PC-9 (cell line): ENCODE measurements at regions of chr2 and their contacts with region 1.

Region 1: DNA sequence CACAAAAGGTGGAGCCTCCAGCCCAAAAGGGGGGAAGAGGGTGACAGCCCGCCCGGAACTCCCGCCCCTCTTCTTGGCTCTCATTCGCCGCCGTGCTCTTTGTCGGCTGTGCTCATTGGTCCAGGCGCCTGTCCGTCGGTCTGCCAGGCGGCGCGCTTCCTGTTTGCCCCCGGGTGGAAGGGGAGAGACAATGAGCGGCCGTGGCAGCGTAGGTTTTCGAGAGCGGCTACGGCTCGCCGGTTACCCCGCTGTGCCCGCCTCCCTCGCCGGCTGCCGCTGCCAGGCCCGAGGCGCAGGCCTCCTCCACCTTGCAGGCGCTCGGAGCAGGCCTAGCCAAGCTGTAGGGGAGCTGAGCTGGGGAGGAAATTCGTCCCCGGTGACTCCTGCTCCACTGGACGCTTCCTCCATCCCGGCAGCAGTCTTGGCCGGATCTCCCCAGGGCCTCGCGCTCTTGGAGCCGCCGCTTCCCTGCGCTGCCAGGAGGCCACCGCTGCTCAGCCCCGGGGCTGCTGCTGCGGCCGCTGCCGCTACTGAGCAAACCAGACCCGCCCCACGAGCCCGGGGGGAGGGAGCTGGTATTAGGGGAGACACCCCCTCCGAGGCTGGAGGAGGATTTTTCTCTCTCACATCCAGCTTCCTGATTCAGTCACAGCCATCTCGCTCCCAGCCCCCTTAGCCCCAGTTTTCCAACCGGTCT is at the start of gene SP3:
- DNase-seq: peak; percentile 97 to 99
- H3K4me3 ChIP-seq: peak within 1 kb of the TSS; percentile 70
- H3K27ac ChIP-seq: peak within 1 kb of the TSS; percentile 85
- H3K4me1 ChIP-seq: peaks cover 43% of the 10 kb centered on the region
- H3K27me3 ChIP-seq: no peaks in the 10 kb centered on the region
- CTCF ChIP-seq: no peak
- total RNA-seq, gene SP3: 93.6 and 127 TPM in 2 replicates

Region 2: GRCh38 chr2:173652767-173653431 is 312.6 kb before region 1 on chr2:
- CTCF ChIA-PET with region 1: no interaction called
- POLR2A ChIA-PET with region 1: no interaction called
- intact Hi-C with region 1: loop called (anchors 2 kb)
- DNase-seq: peak; percentile 87 to 97
- H3K4me3 ChIP-seq: no peak overlapping the region
- H3K27ac ChIP-seq: peak overlapping the region; percentile 86
- H3K4me1 ChIP-seq: peaks cover 18% of the 10 kb centered on the region
- H3K27me3 ChIP-seq: no peaks in the 10 kb centered on the region
- CTCF ChIP-seq: no peak

Region 3: GRCh38 chr2:174004905-174005605 is 39.6 kb after region 1 on chr2:
- CTCF ChIA-PET with region 1: no interaction called
- POLR2A ChIA-PET with region 1: interaction called, 8 read pairs
- intact Hi-C with region 1: loop called (anchors 1 kb)
- DNase-seq: peak; percentile 44 to 55
- H3K4me3 ChIP-seq: no peak overlapping the region
- H3K27ac ChIP-seq: no peak overlapping the region
- H3K4me1 ChIP-seq: peaks cover 7% of the 10 kb centered on the region
- H3K27me3 ChIP-seq: no peaks in the 10 kb centered on the region
- CTCF ChIP-seq: no peak

Region 4: DNA sequence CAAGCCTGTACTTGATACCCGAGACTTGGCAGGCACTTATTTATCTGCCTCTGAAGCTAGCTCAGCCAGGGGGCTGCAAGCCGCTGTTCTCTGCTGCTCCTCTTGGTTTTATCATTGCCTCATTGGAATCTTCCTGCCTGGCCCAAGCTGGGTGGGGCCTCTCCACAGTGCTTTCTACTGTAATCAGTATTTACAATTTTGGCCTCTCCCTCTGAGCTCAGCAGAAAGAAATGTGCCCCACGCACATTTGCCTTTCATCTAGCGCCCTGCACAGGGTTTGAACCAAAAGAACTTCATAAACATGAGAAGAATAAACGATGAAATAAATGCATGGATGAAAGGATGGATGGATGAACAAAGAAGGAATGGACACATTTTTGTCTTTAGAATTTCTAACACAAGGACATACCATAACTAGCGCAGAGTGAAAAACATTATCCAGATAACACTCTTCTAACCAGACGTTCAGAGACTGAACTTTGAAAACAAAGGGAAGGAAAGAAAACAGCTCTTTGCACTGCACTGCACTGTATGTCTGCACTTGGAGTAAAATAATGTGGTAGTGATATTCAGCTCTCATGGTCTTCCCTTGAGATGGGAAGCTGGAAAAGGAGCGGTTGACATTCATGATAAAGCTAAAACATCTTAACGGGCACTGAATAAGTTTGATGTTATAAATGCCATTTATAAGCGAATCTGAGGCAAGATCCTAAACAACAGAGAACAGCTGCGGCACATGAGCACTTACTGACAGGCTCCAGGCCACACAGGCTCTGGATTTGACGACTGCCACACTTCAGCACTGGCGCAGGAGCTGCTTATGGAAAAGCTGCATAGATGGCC is 86.5 kb after region 1 on chr2:
- CTCF ChIA-PET with region 1: no interaction called
- POLR2A ChIA-PET with region 1: interaction called, 6 read pairs
- intact Hi-C with region 1: loop called (anchors 5 kb)
- DNase-seq: peak; percentile 83
- H3K4me3 ChIP-seq: no peak overlapping the region; the same call in 1 of the 2 replicates
- H3K27ac ChIP-seq: no peak overlapping the region
- H3K4me1 ChIP-seq: peaks cover 21% of the 10 kb centered on the region
- H3K27me3 ChIP-seq: no peaks in the 10 kb centered on the region
- CTCF ChIP-seq: no peak

Region 5: DNA sequence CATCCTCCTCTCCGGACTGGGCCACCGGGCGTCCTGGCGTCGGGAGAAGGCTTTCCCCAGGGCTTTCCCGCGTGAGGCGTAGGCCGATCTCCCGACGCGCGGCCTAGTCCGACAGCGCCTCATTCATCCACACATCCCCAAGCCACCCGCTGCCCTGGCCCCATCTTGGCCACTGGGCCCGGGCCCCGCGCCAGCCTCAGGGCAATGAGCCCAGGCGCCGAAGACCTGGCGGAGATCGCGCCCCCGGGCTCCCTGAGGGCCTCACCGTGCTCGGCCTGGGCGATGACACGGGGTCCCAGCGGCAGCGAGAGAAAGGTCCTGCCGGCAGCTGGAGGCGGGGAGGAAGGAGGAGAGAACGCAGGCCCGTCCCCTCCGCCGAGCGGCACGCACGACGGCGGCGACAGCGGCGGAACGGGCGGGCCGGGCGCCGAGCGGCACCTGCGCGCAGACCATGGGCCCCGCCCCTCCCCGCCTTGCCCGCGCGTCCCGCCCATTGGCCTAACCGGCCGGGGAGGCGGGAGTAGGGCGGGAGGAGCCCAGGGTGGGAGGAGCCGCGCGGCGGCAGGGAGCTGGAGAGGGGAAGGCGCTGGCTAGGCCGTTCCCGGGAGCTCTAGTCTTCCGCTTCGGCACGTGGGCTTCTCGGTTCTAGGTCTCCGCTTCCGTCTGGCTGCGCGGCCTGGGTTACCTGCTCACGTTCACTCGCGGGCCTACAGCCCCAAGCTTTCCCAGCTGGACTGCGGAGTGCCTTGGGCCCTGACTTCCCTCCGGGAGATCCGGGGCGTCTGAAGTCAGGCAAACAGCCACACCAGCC is 282.9 kb after region 1 on chr2 and contains the start of gene OLA1:
- CTCF ChIA-PET with region 1: no interaction called
- POLR2A ChIA-PET with region 1: interaction called, 5 read pairs
- intact Hi-C with region 1: loop called (anchors 1 kb)
- DNase-seq: peak; percentile 90 to 100
- H3K4me3 ChIP-seq: peak within 1 kb of the TSS; percentile 90
- H3K27ac ChIP-seq: peak within 1 kb of the TSS; percentile 87
- H3K4me1 ChIP-seq: peaks cover 40% of the 10 kb centered on the region
- H3K27me3 ChIP-seq: no peaks in the 10 kb centered on the region
- CTCF ChIP-seq: 0 out of 2 replicates have a peak, but pooled peaks have one; percentile 12
- total RNA-seq, gene OLA1: 172 and 263 TPM in 2 replicates